ENCODE measurements at regions of chr1 and their contacts with region 1.

Region 1: DNA sequence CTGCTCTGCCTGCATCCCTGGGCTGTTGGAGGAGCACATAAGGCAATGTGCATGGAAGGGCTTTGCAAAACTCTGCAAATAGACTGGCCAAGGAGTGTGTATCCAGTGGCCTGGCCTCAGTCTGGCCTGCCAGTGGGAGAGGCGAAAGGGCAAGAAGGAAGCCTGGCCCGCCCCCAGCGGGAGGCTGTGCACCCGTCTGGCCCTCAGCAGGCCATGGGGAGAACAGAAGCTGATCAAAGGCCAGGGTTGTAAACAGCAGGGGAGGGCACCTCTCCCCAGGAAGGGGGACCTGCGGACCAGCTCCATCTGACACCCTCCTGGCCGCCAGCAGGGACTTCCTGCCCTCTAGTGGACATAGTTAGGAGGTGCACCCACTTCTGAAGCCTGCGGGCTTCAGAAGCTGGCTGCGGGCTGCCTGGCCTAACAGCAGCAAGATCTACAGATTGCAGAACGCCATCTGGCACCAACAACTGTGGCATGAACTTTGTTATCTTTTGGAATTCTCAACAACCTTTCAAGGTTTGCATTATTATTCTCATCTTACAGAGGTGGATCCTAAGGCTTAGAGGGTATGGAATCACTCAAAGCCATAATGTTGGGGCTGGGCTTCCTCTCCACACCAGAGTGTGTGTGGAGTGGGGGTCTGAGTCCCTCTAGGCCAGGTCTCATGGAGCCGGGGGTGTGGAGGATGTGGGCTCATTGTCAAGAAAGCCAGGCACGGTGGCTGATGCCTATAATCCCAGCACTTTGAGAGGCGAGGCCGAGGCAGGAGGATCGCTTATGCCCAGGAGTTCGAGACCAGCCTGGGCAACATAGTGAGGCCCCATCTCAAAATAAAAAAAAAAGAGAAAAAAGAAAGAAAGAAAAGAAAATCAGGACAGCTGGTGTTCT is 18.9 kb upstream of the CDK18 start:
- DNase-seq: peak; percentile 42 to 85 (median 60)
- ATAC-seq: peak; percentile 60 to 81 (median 70)
- H3K4me3 ChIP-seq: no peak overlapping the region
- H3K4me3 Mint-ChIP-seq: no peak overlapping the region
- H3K27ac ChIP-seq: no peak overlapping the region
- H3K27ac Mint-ChIP-seq: no peak overlapping the region
- H3K4me1 ChIP-seq: peaks cover 0 to 31% of the 10 kb centered on the region in 2 experiments
- H3K4me1 Mint-ChIP-seq: peaks cover 21 to 34% (median 29%) of the 10 kb centered on the region in 3 donors
- H3K27me3 ChIP-seq: peaks cover 2 to 52% of the 10 kb centered on the region in 2 experiments
- H3K27me3 Mint-ChIP-seq: peaks cover 40 to 50% of the 10 kb centered on the region in 2 donors

Region 2: DNA sequence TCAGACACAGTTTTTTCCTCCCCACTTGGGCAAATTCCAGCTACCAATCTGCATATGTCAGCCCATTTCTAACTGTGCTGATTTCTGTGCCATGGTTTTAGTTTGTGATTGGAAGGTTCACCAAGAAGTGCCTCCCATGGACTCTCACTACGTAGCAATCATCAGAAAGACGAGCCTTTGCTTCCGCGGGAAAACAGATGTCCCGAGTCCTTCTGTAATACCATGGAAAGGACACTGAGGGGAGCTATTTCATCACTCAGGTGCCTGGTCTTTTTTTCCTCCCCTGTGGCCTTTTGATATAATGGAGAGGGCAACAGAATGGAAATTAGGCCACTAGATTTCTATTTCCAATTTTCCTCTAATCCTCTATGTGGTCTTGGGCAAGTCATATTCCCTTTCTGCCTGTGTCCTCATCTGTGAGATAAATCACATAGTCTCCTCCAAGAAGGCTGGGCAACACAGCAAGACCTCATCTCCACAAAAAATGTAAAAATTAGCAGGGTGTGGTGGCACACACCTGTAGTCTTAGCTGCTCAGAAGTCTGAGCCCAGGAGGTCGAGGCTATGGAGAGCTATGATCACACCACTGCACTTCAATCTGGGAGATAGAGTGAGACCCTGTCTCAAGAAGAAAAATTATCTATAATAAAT is 88.5 kb before region 1 on chr1:
- CTCF ChIA-PET with region 1: interaction called in 1 of 2 experiments, 59 read pairs
- POLR2A ChIA-PET with region 1: interaction called in 1 of 2 experiments, 3 read pairs
- DNase-seq: peak in 13 of 35 experiments; percentile 1 to 66 (median 10)
- ATAC-seq: peak in 2 of 4 experiments; percentile 45 to 55
- H3K4me3 ChIP-seq: no peak overlapping the region
- H3K4me3 Mint-ChIP-seq: no peak overlapping the region
- H3K27ac ChIP-seq: no peak overlapping the region
- H3K27ac Mint-ChIP-seq: no peak overlapping the region
- H3K4me1 ChIP-seq: no peaks in the 10 kb centered on the region
- H3K4me1 Mint-ChIP-seq: peaks cover 0 to 5% (median 5%) of the 10 kb centered on the region in 3 donors
- H3K27me3 ChIP-seq: peaks cover 5 to 7% of the 10 kb centered on the region in 2 experiments
- H3K27me3 Mint-ChIP-seq: peaks cover 5 to 19% of the 10 kb centered on the region in 2 donors

Region 3: GRCh38 chr1:205440476-205441317 is 44.9 kb before region 1 on chr1:
- CTCF ChIA-PET with region 1: interaction called in 1 of 2 experiments, 13 read pairs
- POLR2A ChIA-PET with region 1: no interaction called
- DNase-seq: peak; percentile 20 to 77 (median 56)
- ATAC-seq: peak; percentile 95 to 98 (median 96)
- H3K4me3 ChIP-seq: peak overlapping the region; percentile 44 to 64
- H3K4me3 Mint-ChIP-seq: peak overlapping the region; percentile 79 to 85 (median 80)
- H3K27ac ChIP-seq: peak overlapping the region; percentile 72
- H3K27ac Mint-ChIP-seq: peak overlapping the region; percentile 94 to 97
- H3K4me1 ChIP-seq: peaks cover 4 to 51% of the 10 kb centered on the region in 2 experiments
- H3K4me1 Mint-ChIP-seq: peaks cover 25 to 33% (median 29%) of the 10 kb centered on the region in 3 donors
- H3K27me3 ChIP-seq: peaks cover 0 to 17% of the 10 kb centered on the region in 2 experiments
- H3K27me3 Mint-ChIP-seq: peaks cover 0 to 6% of the 10 kb centered on the region in 2 donors

Measured in T-cell (primary cell).